ENCODE measurements at regions of chr17 and their contacts with region 1.

Region 1: GRCh38 chr17:36601303-36602029 is at the start of gene MRM1:
- DNase-seq: peak; percentile 93
- H3K4me3 Mint-ChIP-seq: peak within 1 kb of the TSS; percentile 85
- H3K27ac Mint-ChIP-seq: peak within 1 kb of the TSS; percentile 79
- H3K4me1 Mint-ChIP-seq: peaks cover 35% of the 10 kb centered on the region
- H3K27me3 Mint-ChIP-seq: no peaks in the 10 kb centered on the region
- total RNA-seq, gene MRM1: 13.5 to 14.6 TPM

Region 2: GRCh38 chr17:36443777-36444176 is 157.7 kb before region 1 on chr17:
- CTCF ChIA-PET with region 1: no interaction called
- POLR2A ChIA-PET with region 1: no interaction called
- intact Hi-C with region 1: no loop called
- DNase-seq: no peak
- H3K4me3 Mint-ChIP-seq: no peak overlapping the region
- H3K27ac Mint-ChIP-seq: no peak overlapping the region
- H3K4me1 Mint-ChIP-seq: no peaks in the 10 kb centered on the region
- H3K27me3 Mint-ChIP-seq: no peaks in the 10 kb centered on the region

Region 3: DNA sequence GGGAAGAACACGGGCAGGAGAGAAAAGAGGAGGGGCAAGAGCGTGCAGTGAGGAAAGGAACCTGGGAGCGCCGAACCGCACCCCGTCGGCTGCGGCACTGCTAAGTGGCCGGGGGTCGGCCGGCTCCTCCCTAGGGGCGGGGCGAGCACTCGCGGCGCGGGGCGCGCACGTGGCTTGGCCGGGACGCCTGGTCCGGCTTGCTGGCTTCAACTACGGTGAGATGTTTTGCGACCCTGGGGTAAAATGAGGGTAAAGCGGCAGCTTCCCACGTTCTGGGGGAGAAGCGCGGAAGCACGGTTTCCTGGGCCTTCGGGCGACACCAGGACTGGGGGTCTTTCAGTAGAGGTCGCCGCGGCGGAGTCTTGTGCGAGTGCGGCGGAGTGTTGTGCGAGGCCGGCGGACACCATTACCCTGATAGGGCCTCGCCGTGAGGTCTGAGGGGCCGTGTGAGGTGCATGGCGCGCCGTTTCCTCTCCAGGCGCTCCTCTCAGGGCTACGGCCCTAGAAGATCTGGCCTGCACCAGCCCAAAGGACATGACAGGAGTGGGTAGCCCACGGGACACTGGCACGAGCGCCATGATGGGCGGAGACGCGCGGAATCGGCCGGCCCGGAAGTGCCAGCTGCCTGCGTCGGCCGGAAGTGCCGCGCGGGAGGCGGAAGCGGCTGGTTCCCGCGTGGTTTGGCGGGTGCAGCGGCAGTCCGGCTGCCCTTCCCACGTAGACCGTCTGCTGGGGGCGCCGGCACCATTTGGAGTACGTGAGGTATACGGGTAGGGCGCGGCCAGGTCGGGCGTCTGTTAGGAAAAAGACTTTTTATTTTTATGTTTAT is 66.4 kb before region 1 on chr17 and contains the starts of genes MYO19 and PIGW:
- CTCF ChIA-PET with region 1: interaction called, 27 read pairs
- POLR2A ChIA-PET with region 1: interaction called, 13 read pairs
- intact Hi-C with region 1: loop called (anchors 1 kb)
- DNase-seq: peak; percentile 91
- H3K4me3 Mint-ChIP-seq: peak within 1 kb of the TSS; percentile 97
- H3K27ac Mint-ChIP-seq: peak within 1 kb of the TSS; percentile 95
- H3K4me1 Mint-ChIP-seq: peaks cover 43% of the 10 kb centered on the region
- H3K27me3 Mint-ChIP-seq: no peaks in the 10 kb centered on the region
- total RNA-seq, gene MYO19: 106 to 112 TPM
- total RNA-seq, gene PIGW: 11.8 to 12.3 TPM

Region 4: GRCh38 chr17:36583787-36584186 is 17.7 kb before region 1 on chr17:
- CTCF ChIA-PET with region 1: interaction called, 13 read pairs
- POLR2A ChIA-PET with region 1: no interaction called
- intact Hi-C with region 1: no loop called
- DNase-seq: no peak
- H3K4me3 Mint-ChIP-seq: no peak overlapping the region
- H3K27ac Mint-ChIP-seq: no peak overlapping the region
- H3K4me1 Mint-ChIP-seq: no peaks in the 10 kb centered on the region
- H3K27me3 Mint-ChIP-seq: no peaks in the 10 kb centered on the region

Region 5: GRCh38 chr17:36722121-36722902 is 120.8 kb after region 1 on chr17:
- CTCF ChIA-PET with region 1: interaction called, 3 read pairs
- POLR2A ChIA-PET with region 1: interaction called, 6 read pairs
- intact Hi-C with region 1: loop called (anchors 2 kb)
- DNase-seq: peak; percentile 90
- H3K4me3 Mint-ChIP-seq: peak overlapping the region; percentile 78
- H3K27ac Mint-ChIP-seq: peak overlapping the region; percentile 97
- H3K4me1 Mint-ChIP-seq: peaks cover 42% of the 10 kb centered on the region
- H3K27me3 Mint-ChIP-seq: no peaks in the 10 kb centered on the region

Region 6: GRCh38 chr17:37373530-37374159 is 772.2 kb after region 1 on chr17:
- CTCF ChIA-PET with region 1: interaction called, 13 read pairs
- POLR2A ChIA-PET with region 1: interaction called, 4 read pairs
- intact Hi-C with region 1: no loop called
- DNase-seq: peak; percentile 83
- H3K4me3 Mint-ChIP-seq: no peak overlapping the region
- H3K27ac Mint-ChIP-seq: no peak overlapping the region
- H3K4me1 Mint-ChIP-seq: peaks cover 6% of the 10 kb centered on the region
- H3K27me3 Mint-ChIP-seq: no peaks in the 10 kb centered on the region

Measured in activated CD4-positive, alpha-beta memory T cell treated with anti-CD3 and anti-CD28 coated beads for 36 hours (primary cell).